GM12878 (cell line): ENCODE measurements at regions of chr2 and their contacts with region 1.

Region 1: GRCh38 chr2:112645310-112646101 is at the start of gene SLC20A1:
- DNase-seq: peak; percentile 74
- ATAC-seq: peak; percentile 94
- H3K4me3 ChIP-seq: peak within 1 kb of the TSS; percentile 89
- H3K27ac ChIP-seq: peak within 1 kb of the TSS; percentile 87
- H3K4me1 ChIP-seq: peaks cover 6% of the 10 kb centered on the region
- H3K27me3 ChIP-seq: peaks cover 0 to 2% of the 10 kb centered on the region in 2 experiments; a peak in 1 of 4 replicates
- CTCF ChIP-seq: peak; percentile 42 to 62 (median 52)
- EP300 ChIP-seq: 0 out of 4 replicates have a peak, but pooled peaks of 1 of the 2 experiments have one; percentile 32
- POLR2A ChIP-seq: peak; percentile 99
- RAD21 ChIP-seq: peak; percentile 54
- polyA plus RNA-seq, gene SLC20A1: 21.2 to 22.6 TPM

Region 2: DNA sequence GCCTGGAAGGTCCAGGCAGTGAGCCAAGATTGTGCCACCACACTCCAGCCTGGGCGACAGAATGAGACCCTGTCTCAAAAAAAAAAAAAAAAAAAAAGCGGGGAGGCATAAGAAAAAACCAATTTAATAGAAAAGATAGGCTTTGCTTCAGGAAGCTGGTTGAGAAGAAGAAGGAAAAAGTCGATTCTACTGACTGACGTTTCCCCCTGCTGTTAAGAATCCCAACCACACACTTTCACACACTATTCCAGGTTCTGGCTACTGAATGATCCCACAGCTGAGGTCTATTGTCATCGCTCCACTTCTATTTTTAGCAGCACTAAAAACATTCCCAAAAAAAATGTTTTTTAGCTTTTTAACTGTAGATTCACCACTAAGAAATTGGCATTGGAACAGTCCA is 67.8 kb before region 1 on chr2:
- CTCF ChIA-PET with region 1: no interaction called
- POLR2A ChIA-PET with region 1: no interaction called
- RAD21 ChIA-PET with region 1: no interaction called
- SMC1A ChIA-PET with region 1: no interaction called
- in situ Hi-C with region 1: no loop called
- intact Hi-C with region 1: no loop called
- DNase-seq: no peak
- ATAC-seq: no peak
- H3K4me3 ChIP-seq: no peak overlapping the region
- H3K27ac ChIP-seq: no peak overlapping the region
- H3K4me1 ChIP-seq: peaks cover 3% of the 10 kb centered on the region; the same call in 1 of the 2 replicates
- H3K27me3 ChIP-seq: no peaks in the 10 kb centered on the region
- CTCF ChIP-seq: no peak
- EP300 ChIP-seq: no peak
- POLR2A ChIP-seq: no peak
- RAD21 ChIP-seq: no peak

Region 3: DNA sequence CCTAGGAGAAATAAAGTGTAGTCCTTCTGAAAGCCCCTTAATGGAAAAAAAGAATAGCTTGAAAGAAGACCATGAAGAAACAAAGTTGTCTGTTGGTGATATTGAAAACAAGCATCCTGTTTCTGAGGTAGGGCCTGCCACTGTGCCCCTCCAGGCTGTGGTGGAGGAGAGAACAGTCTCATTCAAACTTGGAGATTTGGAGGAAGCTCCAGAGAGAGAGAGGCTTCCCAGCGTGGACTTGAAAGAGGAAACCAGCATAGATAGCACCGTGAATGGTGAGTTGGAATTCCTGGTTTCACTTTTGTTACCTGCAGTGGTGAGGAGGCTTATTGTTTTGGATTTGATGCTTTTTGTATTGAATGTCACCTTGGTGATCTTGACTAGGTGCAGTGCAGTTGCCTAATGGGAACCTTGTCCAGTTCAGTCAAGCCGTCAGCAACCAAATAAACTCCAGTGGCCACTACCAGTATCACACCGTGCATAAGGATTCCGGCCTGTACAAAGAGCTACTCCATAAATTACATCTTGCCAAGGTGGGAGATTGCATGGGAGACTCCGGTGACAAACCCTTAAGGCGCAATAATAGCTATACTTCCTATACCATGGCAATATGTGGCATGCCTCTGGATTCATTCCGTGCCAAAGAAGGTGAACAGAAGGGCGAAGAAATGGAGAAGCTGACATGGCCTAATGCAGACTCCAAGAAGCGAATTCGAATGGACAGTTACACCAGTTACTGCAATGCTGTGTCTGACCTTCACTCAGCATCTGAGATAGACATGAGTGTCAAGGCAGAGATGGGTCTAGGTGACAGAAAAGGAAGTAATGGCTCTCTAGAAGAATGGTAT is 13.5 kb after region 1 on chr2:
- CTCF ChIA-PET with region 1: interaction called, 4 read pairs
- POLR2A ChIA-PET with region 1: interaction called, 18 read pairs
- RAD21 ChIA-PET with region 1: interaction called, 11 read pairs
- SMC1A ChIA-PET with region 1: interaction called, 46 read pairs
- in situ Hi-C with region 1: no loop called
- intact Hi-C with region 1: no loop called
- DNase-seq: no peak
- ATAC-seq: no peak
- H3K4me3 ChIP-seq: peak overlapping the region; percentile 6; the same call in 1 of the 2 replicates
- H3K27ac ChIP-seq: no peak overlapping the region; the same call in 1 of the 2 replicates
- H3K4me1 ChIP-seq: peaks cover 21% of the 10 kb centered on the region
- H3K27me3 ChIP-seq: no peaks in the 10 kb centered on the region
- CTCF ChIP-seq: no peak
- EP300 ChIP-seq: no peak
- POLR2A ChIP-seq: no peak; the same call in 1 of the 2 replicates
- RAD21 ChIP-seq: no peak

Region 4: GRCh38 chr2:112674229-112674628 is 28.7 kb after region 1 on chr2:
- CTCF ChIA-PET with region 1: interaction called, 3 read pairs
- POLR2A ChIA-PET with region 1: interaction called, 14 read pairs
- RAD21 ChIA-PET with region 1: no interaction called
- SMC1A ChIA-PET with region 1: interaction called, 4 read pairs
- in situ Hi-C with region 1: no loop called
- intact Hi-C with region 1: no loop called
- DNase-seq: no peak
- ATAC-seq: no peak
- H3K4me3 ChIP-seq: no peak overlapping the region
- H3K27ac ChIP-seq: no peak overlapping the region
- H3K4me1 ChIP-seq: no peaks in the 10 kb centered on the region
- H3K27me3 ChIP-seq: no peaks in the 10 kb centered on the region
- CTCF ChIP-seq: no peak
- EP300 ChIP-seq: no peak
- POLR2A ChIP-seq: no peak
- RAD21 ChIP-seq: no peak

Region 5: GRCh38 chr2:112685271-112685884 is 39.9 kb after region 1 on chr2:
- CTCF ChIA-PET with region 1: interaction called, 41 read pairs
- POLR2A ChIA-PET with region 1: interaction called, 7 read pairs
- RAD21 ChIA-PET with region 1: interaction called, 19 read pairs
- SMC1A ChIA-PET with region 1: interaction called, 49 read pairs
- in situ Hi-C with region 1: no loop called
- intact Hi-C with region 1: no loop called
- DNase-seq: no peak
- ATAC-seq: peak; percentile 73
- H3K4me3 ChIP-seq: no peak overlapping the region
- H3K27ac ChIP-seq: no peak overlapping the region
- H3K4me1 ChIP-seq: peaks cover 13% of the 10 kb centered on the region
- H3K27me3 ChIP-seq: no peaks in the 10 kb centered on the region
- CTCF ChIP-seq: peak in 2 of 3 experiments; percentile 4 to 11; a peak in 1 of 6 replicates
- EP300 ChIP-seq: no peak
- POLR2A ChIP-seq: no peak
- RAD21 ChIP-seq: no peak

Region 6: DNA sequence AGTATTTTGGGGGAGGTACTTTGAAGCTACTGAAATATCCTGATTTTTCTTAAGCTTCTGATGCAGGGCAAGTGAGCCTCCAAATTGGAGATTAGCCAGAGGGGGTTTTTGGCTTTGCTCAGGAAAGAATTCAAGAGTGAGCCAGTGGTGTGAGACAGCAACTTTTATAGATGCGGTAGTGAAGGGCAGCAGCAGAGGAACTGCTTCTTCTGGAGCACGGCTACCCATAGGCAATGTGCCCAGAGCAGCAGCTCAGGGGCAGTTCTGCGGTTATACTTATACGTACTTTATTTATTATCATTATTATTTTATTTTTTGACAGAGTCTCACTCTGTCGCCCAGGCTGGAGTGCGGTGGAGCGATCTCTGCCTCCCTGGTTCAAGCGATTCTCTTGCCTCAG is 55.5 kb after region 1 on chr2:
- CTCF ChIA-PET with region 1: interaction called, 22 read pairs
- POLR2A ChIA-PET with region 1: interaction called, 51 read pairs
- RAD21 ChIA-PET with region 1: interaction called, 19 read pairs
- SMC1A ChIA-PET with region 1: interaction called, 17 read pairs
- in situ Hi-C with region 1: no loop called
- intact Hi-C with region 1: loop called (anchors 5 kb)
- DNase-seq: no peak
- ATAC-seq: peak; percentile 25; the same call in 2 of the 3 replicates
- H3K4me3 ChIP-seq: no peak overlapping the region
- H3K27ac ChIP-seq: peak overlapping the region; percentile 63
- H3K4me1 ChIP-seq: peaks cover 36% of the 10 kb centered on the region
- H3K27me3 ChIP-seq: no peaks in the 10 kb centered on the region
- CTCF ChIP-seq: no peak
- EP300 ChIP-seq: no peak
- POLR2A ChIP-seq: no peak
- RAD21 ChIP-seq: no peak

Region 7: DNA sequence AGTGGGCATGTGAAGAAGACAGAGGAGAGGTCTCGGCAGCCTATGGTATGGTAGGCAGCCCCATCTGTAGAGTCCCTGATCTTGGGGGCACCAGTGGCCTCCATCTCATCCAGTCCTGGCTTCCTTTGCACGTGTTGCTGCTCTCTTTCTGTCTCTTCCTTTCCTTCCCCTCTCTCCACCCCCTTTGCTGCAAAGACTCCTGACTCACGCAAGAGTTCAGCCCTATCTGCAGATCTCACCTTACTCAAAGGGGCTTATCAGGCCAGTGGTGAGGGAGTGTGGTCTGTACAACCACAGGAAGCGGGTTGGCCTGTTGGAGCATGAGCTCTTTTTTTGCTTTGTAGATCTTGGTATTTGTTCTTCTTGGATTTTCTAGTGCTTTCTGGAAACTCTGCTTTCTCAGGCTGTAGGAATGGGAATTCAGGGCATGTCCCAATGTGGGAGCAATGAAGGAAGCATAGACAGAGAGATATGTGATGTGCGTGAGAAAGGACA is 60.7 kb after region 1 on chr2:
- CTCF ChIA-PET with region 1: interaction called, 22 read pairs
- POLR2A ChIA-PET with region 1: interaction called, 51 read pairs
- RAD21 ChIA-PET with region 1: interaction called, 19 read pairs
- SMC1A ChIA-PET with region 1: interaction called, 17 read pairs
- in situ Hi-C with region 1: no loop called
- intact Hi-C with region 1: loop called (anchors 5 kb)
- DNase-seq: peak; percentile 64
- ATAC-seq: peak; percentile 63
- H3K4me3 ChIP-seq: no peak overlapping the region; the same call in 1 of the 2 replicates
- H3K27ac ChIP-seq: peak overlapping the region; percentile 94
- H3K4me1 ChIP-seq: peaks cover 53% of the 10 kb centered on the region
- H3K27me3 ChIP-seq: no peaks in the 10 kb centered on the region
- CTCF ChIP-seq: no peak
- EP300 ChIP-seq: no peak; a peak in 1 of 4 replicates
- POLR2A ChIP-seq: no peak
- RAD21 ChIP-seq: no peak

Region 8: GRCh38 chr2:113012436-113013335 is 367.2 kb after region 1 on chr2:
- CTCF ChIA-PET with region 1: no interaction called
- POLR2A ChIA-PET with region 1: no interaction called
- RAD21 ChIA-PET with region 1: no interaction called
- SMC1A ChIA-PET with region 1: no interaction called
- in situ Hi-C with region 1: no loop called
- intact Hi-C with region 1: no loop called
- DNase-seq: no peak
- ATAC-seq: no peak
- H3K4me3 ChIP-seq: no peak overlapping the region
- H3K27ac ChIP-seq: no peak overlapping the region
- H3K4me1 ChIP-seq: no peaks in the 10 kb centered on the region
- H3K27me3 ChIP-seq: no peaks in the 10 kb centered on the region
- CTCF ChIP-seq: no peak
- EP300 ChIP-seq: no peak
- POLR2A ChIP-seq: no peak
- RAD21 ChIP-seq: no peak